H1 (cell line): ENCODE measurements at regions of chr15 and their contacts with region 1.

Region 1: DNA sequence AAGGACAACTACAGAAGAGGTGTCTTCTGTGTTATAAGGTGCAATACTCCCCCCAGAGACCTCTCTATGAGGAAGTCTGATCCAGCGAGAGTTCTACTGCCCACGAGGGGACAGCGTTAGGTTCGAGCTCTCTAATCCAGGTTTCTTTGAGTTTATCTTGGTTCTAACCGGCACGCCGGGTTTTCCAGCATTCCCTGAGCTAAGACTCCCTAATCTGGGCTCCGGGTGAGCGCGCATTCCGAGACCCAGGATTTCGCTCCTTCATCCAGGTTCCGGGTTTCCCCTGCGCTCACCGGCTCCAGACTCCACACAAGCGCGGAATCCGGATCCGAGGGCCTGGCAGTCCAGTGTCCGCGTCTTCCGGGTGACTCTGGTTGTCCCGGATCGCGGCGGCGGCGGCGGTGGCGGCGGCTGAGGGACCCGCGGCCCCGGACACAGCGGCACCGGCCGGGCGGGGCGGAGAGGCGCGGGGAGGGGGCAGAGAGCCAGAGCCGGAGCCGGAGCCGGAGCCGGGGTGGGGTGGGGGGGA is at the start of gene ZNF609:
- DNase-seq: peak; percentile 90 to 100
- H3K4me3 ChIP-seq: peak within 1 kb of the TSS; percentile 84 to 93 (median 91)
- H3K27ac ChIP-seq: peak within 1 kb of the TSS; percentile 58; the same call in 1 of the 2 replicates
- H3K4me1 ChIP-seq: peaks cover 0 to 14% (median 10%) of the 10 kb centered on the region in 4 experiments; a peak in 6 of 7 replicates
- H3K27me3 ChIP-seq: no peaks in the 10 kb centered on the region
- CTCF ChIP-seq: 0 out of 4 replicates have a peak, but pooled peaks of 1 of the 3 experiments have one; percentile 6
- EP300 ChIP-seq: peak; percentile 15 to 95
- POLR2A ChIP-seq: peak; percentile 50 to 79
- RAD21 ChIP-seq: peak; percentile 17 to 50
- total RNA-seq, gene ZNF609: 47.8 TPM in 2 replicates

Region 2: GRCh38 chr15:64333986-64334929 is 126.0 kb before region 1 on chr15:
- CTCF ChIA-PET with region 1: no interaction called
- POLR2A ChIA-PET with region 1: no interaction called
- DNase-seq: peak in 1 of 2 experiments; percentile 7
- H3K4me3 ChIP-seq: no peak overlapping the region
- H3K27ac ChIP-seq: no peak overlapping the region
- H3K4me1 ChIP-seq: no peaks in the 10 kb centered on the region
- H3K27me3 ChIP-seq: no peaks in the 10 kb centered on the region
- CTCF ChIP-seq: peak; percentile 14 to 54 (median 24); a peak in 3 of 4 replicates
- EP300 ChIP-seq: no peak
- POLR2A ChIP-seq: no peak
- RAD21 ChIP-seq: peak; percentile 17 to 37; a peak in 2 of 4 replicates

Region 3: DNA sequence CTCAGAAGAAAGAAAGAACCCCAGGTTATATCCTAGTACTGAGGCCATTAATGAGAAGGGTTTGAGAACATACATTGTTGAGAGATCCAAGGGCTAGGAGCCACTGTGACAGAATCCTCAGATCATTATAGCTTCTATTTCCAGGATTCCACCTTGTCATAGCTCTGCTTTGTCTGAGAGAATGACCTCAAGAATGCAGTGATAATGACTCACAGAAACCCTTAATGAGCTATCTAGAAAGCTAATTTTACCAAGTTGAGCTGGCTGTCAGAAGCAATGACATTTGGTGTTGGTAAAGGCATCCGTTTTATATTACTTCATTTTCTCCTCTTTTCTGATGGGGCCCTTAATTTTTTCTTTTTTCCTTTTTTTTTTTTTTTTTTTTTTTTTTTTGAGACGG is 61.7 kb before region 1 on chr15:
- CTCF ChIA-PET with region 1: no interaction called
- POLR2A ChIA-PET with region 1: no interaction called
- DNase-seq: no peak
- H3K4me3 ChIP-seq: no peak overlapping the region
- H3K27ac ChIP-seq: no peak overlapping the region
- H3K4me1 ChIP-seq: no peaks in the 10 kb centered on the region
- H3K27me3 ChIP-seq: no peaks in the 10 kb centered on the region
- CTCF ChIP-seq: no peak
- EP300 ChIP-seq: no peak
- POLR2A ChIP-seq: no peak
- RAD21 ChIP-seq: no peak

Region 4: GRCh38 chr15:64412216-64412615 is 48.1 kb before region 1 on chr15:
- CTCF ChIA-PET with region 1: no interaction called
- POLR2A ChIA-PET with region 1: no interaction called
- DNase-seq: no peak
- H3K4me3 ChIP-seq: no peak overlapping the region
- H3K27ac ChIP-seq: no peak overlapping the region
- H3K4me1 ChIP-seq: no peaks in the 10 kb centered on the region
- H3K27me3 ChIP-seq: no peaks in the 10 kb centered on the region
- CTCF ChIP-seq: no peak
- EP300 ChIP-seq: no peak
- POLR2A ChIP-seq: no peak
- RAD21 ChIP-seq: no peak

Region 5: GRCh38 chr15:64478863-64479262 is 18.6 kb after region 1 on chr15:
- CTCF ChIA-PET with region 1: interaction called, 4 read pairs
- POLR2A ChIA-PET with region 1: interaction called, 43 read pairs
- DNase-seq: no peak
- H3K4me3 ChIP-seq: no peak overlapping the region
- H3K27ac ChIP-seq: no peak overlapping the region
- H3K4me1 ChIP-seq: no peaks in the 10 kb centered on the region; a peak in 2 of 7 replicates
- H3K27me3 ChIP-seq: no peaks in the 10 kb centered on the region
- CTCF ChIP-seq: no peak
- EP300 ChIP-seq: no peak
- POLR2A ChIP-seq: no peak
- RAD21 ChIP-seq: no peak